ENCODE measurements at regions of chr7 and their contacts with region 1.

Region 1: GRCh38 chr7:22255834-22256233 is 101.1 kb downstream of the RAPGEF5 start:
- DNase-seq: no peak
- H3K4me3 ChIP-seq: no peak overlapping the region
- H3K27ac ChIP-seq: no peak overlapping the region
- H3K4me1 ChIP-seq: no peaks in the 10 kb centered on the region
- H3K27me3 ChIP-seq: no peaks in the 10 kb centered on the region
- CTCF ChIP-seq: no peak

Region 2: GRCh38 chr7:22110227-22110839 is 145.5 kb before region 1 on chr7:
- intact Hi-C with region 1: loop called (anchors 1 kb)
- DNase-seq: peak in 1 of 2 donors; percentile 79
- H3K4me3 ChIP-seq: no peak overlapping the region
- H3K27ac ChIP-seq: no peak overlapping the region
- H3K4me1 ChIP-seq: no peaks in the 10 kb centered on the region
- H3K27me3 ChIP-seq: peaks cover 4% of the 10 kb centered on the region
- CTCF ChIP-seq: peak; percentile 83 to 88 (median 86)

Region 3: DNA sequence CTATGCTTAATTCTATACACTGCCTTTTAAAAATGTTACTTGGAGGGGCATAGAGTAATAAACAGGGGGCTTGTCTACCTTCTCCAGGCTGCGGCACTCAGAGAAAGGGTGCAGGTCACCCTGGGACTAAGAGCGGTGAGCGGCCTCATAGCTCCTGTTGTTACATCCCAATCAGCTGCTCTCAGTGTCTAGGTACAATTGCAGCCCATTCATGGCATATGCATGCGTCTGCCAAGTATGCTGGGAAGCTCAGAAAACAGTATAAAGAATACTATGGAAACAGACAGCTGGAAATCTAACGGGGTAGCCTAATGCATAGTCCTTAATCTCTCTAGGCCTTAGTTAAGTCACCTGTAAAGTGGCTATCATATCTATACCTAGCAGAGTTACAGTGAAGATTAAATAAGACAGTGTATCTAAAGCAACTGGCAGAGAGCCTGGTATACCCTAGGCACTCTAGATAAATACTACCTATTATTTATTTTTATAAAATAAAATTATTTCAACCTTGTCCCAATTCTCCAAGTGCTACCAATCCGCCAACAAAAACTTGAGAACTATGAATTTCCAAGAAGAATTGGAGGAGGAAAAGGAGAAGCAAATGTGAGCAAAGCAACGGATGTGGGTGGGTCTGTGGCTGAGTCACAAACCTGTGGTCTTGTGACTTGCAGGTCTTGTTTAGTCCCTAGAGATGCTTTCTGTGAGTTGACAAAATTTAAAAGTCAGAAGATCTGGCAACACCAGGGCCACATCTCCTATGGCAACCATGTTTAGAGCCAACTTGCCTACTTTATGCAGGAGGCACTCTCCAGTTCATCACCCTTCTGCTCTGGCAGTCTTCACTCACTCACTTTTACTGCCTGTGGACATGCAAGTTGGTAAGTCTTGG is 81.9 kb before region 1 on chr7:
- intact Hi-C with region 1: loop called (anchors 5 kb)
- DNase-seq: no peak
- H3K4me3 ChIP-seq: no peak overlapping the region
- H3K27ac ChIP-seq: peak overlapping the region in 1 of 2 donors; percentile 68
- H3K4me1 ChIP-seq: peaks cover 0 to 12% of the 10 kb centered on the region in 2 donors
- H3K27me3 ChIP-seq: no peaks in the 10 kb centered on the region
- CTCF ChIP-seq: no peak

Region 4: DNA sequence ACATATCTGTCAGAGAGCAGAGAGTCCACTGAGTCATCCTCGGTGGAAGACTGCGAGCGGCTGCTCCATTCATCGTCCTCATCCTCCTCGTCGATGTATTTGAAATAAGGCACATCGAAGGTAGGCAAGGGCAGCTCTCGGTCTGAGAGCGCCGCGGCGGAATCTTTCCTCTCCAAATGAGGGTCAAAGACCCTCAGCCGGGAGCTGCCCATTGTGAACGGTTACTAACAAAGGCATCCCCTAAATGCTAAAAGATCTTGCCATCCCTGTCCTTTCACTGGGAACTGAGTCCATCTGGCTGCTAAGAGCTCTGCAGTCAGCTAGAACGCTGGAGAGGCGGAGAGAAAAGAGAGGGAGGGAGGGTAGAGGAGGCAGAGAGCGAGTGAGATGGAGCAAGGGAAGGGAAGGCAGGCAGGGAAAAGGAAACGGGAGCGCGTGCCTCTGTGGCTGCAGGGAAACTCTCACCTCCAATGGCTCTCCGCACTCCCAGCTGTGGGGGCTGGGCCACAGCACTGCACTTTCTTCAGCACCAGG is 62.3 kb before region 1 on chr7:
- intact Hi-C with region 1: loop called (anchors 5 kb)
- DNase-seq: peak in 1 of 2 donors; percentile 69
- H3K4me3 ChIP-seq: peak overlapping the region; percentile 53 to 62
- H3K27ac ChIP-seq: peak overlapping the region in 1 of 2 donors; percentile 58
- H3K4me1 ChIP-seq: peaks cover 0 to 8% of the 10 kb centered on the region in 2 donors
- H3K27me3 ChIP-seq: no peaks in the 10 kb centered on the region
- CTCF ChIP-seq: no peak

Region 5: DNA sequence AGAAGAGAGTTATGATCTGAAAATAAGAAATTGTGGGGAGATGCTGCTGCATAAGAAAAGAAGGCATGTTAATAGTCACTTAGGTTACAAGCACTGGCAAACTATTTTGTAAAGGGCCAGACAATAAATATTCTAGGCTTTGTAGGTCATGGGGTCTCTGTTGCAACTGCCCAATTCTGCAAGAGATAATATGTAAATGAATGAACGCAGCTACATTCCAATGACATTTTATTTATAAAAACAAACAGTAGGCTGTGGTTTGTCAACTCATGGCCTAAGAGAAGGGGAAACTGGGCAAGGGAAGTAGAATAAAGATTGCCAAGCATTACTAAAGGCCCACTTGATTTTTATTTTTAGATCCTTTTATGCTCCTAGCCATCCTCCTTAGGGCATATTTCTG is 32.0 kb before region 1 on chr7:
- intact Hi-C with region 1: no loop called
- DNase-seq: no peak
- H3K4me3 ChIP-seq: no peak overlapping the region
- H3K27ac ChIP-seq: peak overlapping the region; percentile 66 to 86
- H3K4me1 ChIP-seq: peaks cover 3 to 8% of the 10 kb centered on the region in 2 donors
- H3K27me3 ChIP-seq: no peaks in the 10 kb centered on the region
- CTCF ChIP-seq: no peak

Region 6: GRCh38 chr7:22488643-22489462 is 233.0 kb after region 1 on chr7:
- intact Hi-C with region 1: loop called (anchors 5 kb)
- DNase-seq: peak in 1 of 2 donors; percentile 79
- H3K4me3 ChIP-seq: no peak overlapping the region
- H3K27ac ChIP-seq: no peak overlapping the region
- H3K4me1 ChIP-seq: no peaks in the 10 kb centered on the region
- H3K27me3 ChIP-seq: no peaks in the 10 kb centered on the region
- CTCF ChIP-seq: peak; percentile 68 to 88 (median 81)

Measured in ascending aorta (tissue), 2 donors.